ENCODE measurements at regions of chr2 and their contacts with region 1.

Region 1: GRCh38 chr2:37231241-37232130 is at the starts of genes CEBPZ and NDUFAF7:
- DNase-seq: peak; percentile 89
- H3K4me3 Mint-ChIP-seq: no peak within 1 kb of the TSS
- H3K27ac Mint-ChIP-seq: no peak within 1 kb of the TSS
- H3K4me1 Mint-ChIP-seq: peaks cover 27% of the 10 kb centered on the region
- H3K27me3 Mint-ChIP-seq: no peaks in the 10 kb centered on the region
- total RNA-seq, gene CEBPZ: 42.7 to 43.7 TPM
- total RNA-seq, gene NDUFAF7: 17.7 to 19.4 TPM

Region 2: GRCh38 chr2:37156857-37157714 is 74.4 kb before region 1 on chr2 and contains the start of gene EIF2AK2:
- CTCF ChIA-PET with region 1: no interaction called
- POLR2A ChIA-PET with region 1: interaction called, 17 read pairs
- DNase-seq: peak; percentile 92
- H3K4me3 Mint-ChIP-seq: peak within 1 kb of the TSS; percentile 91
- H3K27ac Mint-ChIP-seq: peak within 1 kb of the TSS; percentile 94
- H3K4me1 Mint-ChIP-seq: peaks cover 44% of the 10 kb centered on the region
- H3K27me3 Mint-ChIP-seq: no peaks in the 10 kb centered on the region
- total RNA-seq, gene EIF2AK2: 136 to 142 TPM

Region 3: GRCh38 chr2:37196320-37197195 is 34.9 kb before region 1 on chr2 and contains the start of gene CEBPZOS:
- CTCF ChIA-PET with region 1: no interaction called
- POLR2A ChIA-PET with region 1: interaction called, 13 read pairs
- DNase-seq: peak; percentile 90
- H3K4me3 Mint-ChIP-seq: peak within 1 kb of the TSS; percentile 98
- H3K27ac Mint-ChIP-seq: peak within 1 kb of the TSS; percentile 97
- H3K4me1 Mint-ChIP-seq: peaks cover 20% of the 10 kb centered on the region
- H3K27me3 Mint-ChIP-seq: no peaks in the 10 kb centered on the region
- total RNA-seq, gene CEBPZOS: 32.9 to 36.3 TPM

Region 4: GRCh38 chr2:37244017-37244416 is 12.5 kb after region 1 on chr2:
- CTCF ChIA-PET with region 1: interaction called, 4 read pairs
- POLR2A ChIA-PET with region 1: interaction called, 14 read pairs
- DNase-seq: no peak
- H3K4me3 Mint-ChIP-seq: no peak overlapping the region
- H3K27ac Mint-ChIP-seq: no peak overlapping the region
- H3K4me1 Mint-ChIP-seq: peaks cover 19% of the 10 kb centered on the region
- H3K27me3 Mint-ChIP-seq: no peaks in the 10 kb centered on the region

Region 5: DNA sequence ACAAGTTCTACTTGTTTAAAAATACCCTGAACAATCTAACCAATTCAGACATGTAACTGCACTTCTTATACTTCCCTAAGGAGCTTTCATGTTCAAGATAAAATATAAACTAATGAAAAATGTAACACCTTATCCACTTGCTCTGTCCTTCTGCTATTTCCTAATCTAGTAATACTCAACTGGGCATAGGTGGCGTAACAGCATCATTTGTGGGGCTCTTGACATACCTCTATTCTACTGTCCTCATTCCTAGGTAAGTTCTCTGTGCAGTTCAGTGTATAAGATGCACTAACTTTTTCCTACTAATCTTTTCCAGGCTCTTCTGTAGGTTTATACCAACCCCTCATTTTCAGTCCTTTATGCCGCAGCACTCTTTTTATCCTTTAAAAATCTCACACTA is 56.5 kb after region 1 on chr2:
- CTCF ChIA-PET with region 1: no interaction called
- POLR2A ChIA-PET with region 1: no interaction called
- DNase-seq: peak; percentile 18
- H3K4me3 Mint-ChIP-seq: no peak overlapping the region
- H3K27ac Mint-ChIP-seq: no peak overlapping the region
- H3K4me1 Mint-ChIP-seq: no peaks in the 10 kb centered on the region
- H3K27me3 Mint-ChIP-seq: no peaks in the 10 kb centered on the region